Testis (tissue), 5 donors: ENCODE measurements at regions of chr5 and their contacts with region 1.

Region 1: GRCh38 chr5:137735555-137736284 is at the start of gene KLHL3:
- DNase-seq: peak; percentile 29
- H3K4me3 ChIP-seq: peak within 1 kb of the TSS in 1 of 2 donors; percentile 11
- H3K27ac ChIP-seq: no peak within 1 kb of the TSS
- H3K4me1 ChIP-seq: peaks cover 15% of the 10 kb centered on the region
- H3K27me3 ChIP-seq: no peaks in the 10 kb centered on the region
- CTCF ChIP-seq: no peak
- POLR2A ChIP-seq: no peak
- total RNA-seq, gene KLHL3: 26.2 to 35.0 TPM

Region 2: GRCh38 chr5:137629646-137630045 is 106.1 kb before region 1 on chr5:
- intact Hi-C with region 1: loop called (anchors 10 kb)
- DNase-seq: no peak
- H3K4me3 ChIP-seq: no peak overlapping the region
- H3K27ac ChIP-seq: no peak overlapping the region
- H3K4me1 ChIP-seq: peaks cover 23% of the 10 kb centered on the region
- H3K27me3 ChIP-seq: no peaks in the 10 kb centered on the region
- CTCF ChIP-seq: peak; percentile 84 to 93 (median 86)
- POLR2A ChIP-seq: no peak